ENCODE measurements at regions of chr1 and their contacts with region 1.

Region 1: GRCh38 chr1:92536980-92537884 is 50.5 kb upstream of the GFI1 start:
- DNase-seq: peak; percentile 35
- H3K4me3 Mint-ChIP-seq: peak overlapping the region; percentile 66
- H3K27ac Mint-ChIP-seq: peak overlapping the region; percentile 93
- H3K4me1 Mint-ChIP-seq: peaks cover 76% of the 10 kb centered on the region
- H3K27me3 Mint-ChIP-seq: no peaks in the 10 kb centered on the region

Region 2: DNA sequence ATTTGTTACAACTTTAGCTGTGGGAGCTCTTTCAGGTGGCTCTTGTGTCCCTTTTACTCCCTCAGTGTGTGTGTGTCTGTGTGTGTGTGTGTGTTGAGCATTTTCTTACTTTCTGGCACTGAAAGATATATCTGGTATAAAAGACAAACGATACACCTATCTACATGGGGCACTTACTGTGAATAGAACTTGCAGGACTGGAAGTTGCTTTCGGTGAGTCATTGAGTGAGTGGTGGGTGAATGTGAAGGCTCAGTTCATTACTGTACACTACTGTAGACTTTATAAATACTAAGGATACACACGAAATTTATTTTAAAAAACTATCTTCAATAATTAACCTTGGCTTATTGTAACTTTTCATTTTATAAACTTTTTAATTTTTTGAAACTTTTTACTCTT is 418.4 kb before region 1 on chr1:
- intact Hi-C with region 1: no loop called
- DNase-seq: no peak
- H3K4me3 Mint-ChIP-seq: no peak overlapping the region
- H3K27ac Mint-ChIP-seq: no peak overlapping the region
- H3K4me1 Mint-ChIP-seq: peaks cover 6% of the 10 kb centered on the region
- H3K27me3 Mint-ChIP-seq: no peaks in the 10 kb centered on the region

Region 3: DNA sequence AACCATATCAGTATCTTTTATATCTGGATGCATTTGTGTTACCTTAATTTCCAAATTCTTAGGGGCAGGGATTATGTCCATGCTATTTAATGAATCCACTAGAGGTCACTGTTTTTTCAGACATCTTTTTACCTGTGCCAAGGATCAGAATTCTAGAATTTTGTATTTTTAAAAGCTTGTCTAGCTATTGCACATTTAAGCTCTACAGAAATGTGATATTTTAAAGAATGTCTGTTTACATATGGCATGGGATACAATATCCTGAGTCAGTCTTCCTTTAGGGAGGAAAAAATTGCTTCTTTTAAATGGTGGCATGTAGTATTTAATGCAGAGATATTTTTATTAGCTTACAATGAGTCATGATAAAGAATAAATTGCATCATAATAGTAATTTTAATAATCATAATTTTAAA is 227.0 kb before region 1 on chr1:
- intact Hi-C with region 1: loop called (anchors 1 kb)
- DNase-seq: no peak
- H3K4me3 Mint-ChIP-seq: no peak overlapping the region
- H3K27ac Mint-ChIP-seq: no peak overlapping the region
- H3K4me1 Mint-ChIP-seq: peaks cover 39% of the 10 kb centered on the region
- H3K27me3 Mint-ChIP-seq: no peaks in the 10 kb centered on the region

Region 4: GRCh38 chr1:92485381-92486257 is 51.6 kb before region 1 on chr1:
- intact Hi-C with region 1: loop called (anchors 1 kb)
- DNase-seq: peak; percentile 88
- H3K4me3 Mint-ChIP-seq: peak overlapping the region; percentile 99
- H3K27ac Mint-ChIP-seq: peak overlapping the region; percentile 97
- H3K4me1 Mint-ChIP-seq: peaks cover 26% of the 10 kb centered on the region
- H3K27me3 Mint-ChIP-seq: no peaks in the 10 kb centered on the region

Region 5: DNA sequence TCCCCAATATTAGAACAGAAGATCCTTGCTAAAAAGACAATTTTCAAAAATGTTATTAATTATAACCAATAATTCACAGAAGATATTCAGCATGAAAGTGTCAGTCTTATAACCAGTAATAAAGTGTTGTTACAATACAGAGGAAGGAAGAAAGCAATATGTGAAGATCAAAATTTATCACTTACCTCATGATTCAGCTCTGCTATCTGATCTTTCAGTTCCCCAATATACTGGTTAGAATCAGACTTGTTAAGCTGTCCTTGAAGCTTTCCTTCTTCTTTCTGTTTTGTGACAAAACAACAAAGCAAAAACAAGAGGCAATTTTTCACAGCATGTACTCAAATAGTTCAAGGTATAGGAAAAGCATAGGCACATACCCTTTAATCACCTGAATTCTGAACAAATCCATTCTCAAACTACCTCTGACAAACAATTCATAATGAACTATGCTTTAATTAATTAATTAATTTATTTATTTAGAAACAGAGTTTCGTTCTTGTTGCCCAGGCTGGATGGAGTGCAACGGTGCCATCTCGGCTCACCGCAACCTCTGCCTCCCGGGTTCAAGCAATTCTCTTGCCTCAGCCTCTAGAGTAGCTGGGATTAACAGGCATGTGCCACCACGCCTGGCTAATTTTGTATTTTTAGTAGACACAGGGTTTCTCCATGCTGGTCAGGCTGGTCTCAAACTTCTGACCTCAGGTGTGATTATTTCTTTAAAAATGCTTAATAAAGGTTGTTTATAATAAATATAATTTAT is 26.4 kb after region 1 on chr1:
- intact Hi-C with region 1: loop called (anchors 2 kb)
- DNase-seq: no peak
- H3K4me3 Mint-ChIP-seq: peak overlapping the region; percentile 7
- H3K27ac Mint-ChIP-seq: peak overlapping the region; percentile 65
- H3K4me1 Mint-ChIP-seq: peaks cover 59% of the 10 kb centered on the region
- H3K27me3 Mint-ChIP-seq: no peaks in the 10 kb centered on the region

Region 6: GRCh38 chr1:92583821-92584760 is 46.9 kb after region 1 on chr1:
- intact Hi-C with region 1: loop called (anchors 1 kb)
- DNase-seq: no peak
- H3K4me3 Mint-ChIP-seq: peak overlapping the region; percentile 55
- H3K27ac Mint-ChIP-seq: peak overlapping the region; percentile 88
- H3K4me1 Mint-ChIP-seq: peaks cover 60% of the 10 kb centered on the region
- H3K27me3 Mint-ChIP-seq: no peaks in the 10 kb centered on the region

Region 7: GRCh38 chr1:92804721-92805169 is 267.5 kb after region 1 on chr1:
- intact Hi-C with region 1: no loop called
- DNase-seq: peak; percentile 13
- H3K4me3 Mint-ChIP-seq: no peak overlapping the region
- H3K27ac Mint-ChIP-seq: no peak overlapping the region
- H3K4me1 Mint-ChIP-seq: peaks cover 2% of the 10 kb centered on the region
- H3K27me3 Mint-ChIP-seq: peaks cover 26% of the 10 kb centered on the region

Measured in activated T-helper 2 cell treated with anti-CD3 and anti-CD28 coated beads, Interferon-gamma antibody, Interleukin-2, Interleukin-4, amounts not matched to agents 10 μg/mL and 5 μg/mL and 100 μg/mL, durations not matched to agents 14 hours and 24 hours and 36 hours (primary cell).